ENCODE measurements at regions of chr20 and their contacts with region 1.

Region 1: GRCh38 chr20:9252991-9253539 is 184.2 kb downstream of the PLCB4 start:
- DNase-seq: no peak
- CTCF ChIP-seq: no peak

Region 2: DNA sequence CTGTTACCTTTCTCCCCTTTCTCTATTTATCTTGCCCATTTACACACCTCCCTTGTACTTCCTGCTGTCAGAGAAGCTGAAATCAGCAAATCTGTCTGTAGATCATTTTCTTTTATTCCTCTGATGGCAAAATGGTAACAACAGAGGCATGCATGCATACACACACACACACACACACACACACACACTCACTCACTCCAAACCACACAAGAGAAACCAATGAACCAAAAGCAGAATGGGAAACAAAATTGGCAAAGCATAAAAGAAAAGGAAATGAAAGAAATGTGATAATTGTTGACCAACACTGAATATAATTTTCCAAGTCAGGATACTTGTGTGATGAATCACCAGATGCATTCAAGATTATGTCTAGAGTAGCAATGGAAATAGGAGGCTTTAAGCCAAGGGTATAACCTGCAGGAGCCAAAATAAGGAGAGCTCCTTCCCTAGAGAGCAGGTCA is 11.8 kb before region 1 on chr20:
- CTCF ChIA-PET with region 1: interaction called, 10 read pairs
- POLR2A ChIA-PET with region 1: no interaction called
- DNase-seq: no peak
- CTCF ChIP-seq: no peak

Region 3: DNA sequence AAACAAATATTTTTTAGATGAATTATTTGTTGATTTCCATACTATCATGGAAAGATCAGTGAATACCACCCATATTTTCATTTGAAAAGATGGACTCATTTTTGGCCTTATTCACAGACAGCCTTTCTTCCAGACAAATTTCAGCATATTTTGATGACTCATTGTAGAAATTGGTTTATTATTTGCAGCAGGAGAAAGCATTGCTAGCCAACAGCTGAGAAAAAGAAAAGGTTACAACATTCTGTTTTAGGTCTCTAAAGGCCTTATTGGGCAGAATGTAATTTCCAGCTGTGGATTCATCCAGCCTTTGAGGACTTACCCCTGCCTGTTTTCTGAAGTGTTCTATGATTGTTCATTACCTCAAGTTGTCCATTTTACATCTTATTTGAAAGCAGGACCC is 17.8 kb after region 1 on chr20:
- CTCF ChIA-PET with region 1: no interaction called
- POLR2A ChIA-PET with region 1: no interaction called
- DNase-seq: no peak
- CTCF ChIP-seq: no peak